ENCODE measurements at regions of chr7 and their contacts with region 1.

Region 1: DNA sequence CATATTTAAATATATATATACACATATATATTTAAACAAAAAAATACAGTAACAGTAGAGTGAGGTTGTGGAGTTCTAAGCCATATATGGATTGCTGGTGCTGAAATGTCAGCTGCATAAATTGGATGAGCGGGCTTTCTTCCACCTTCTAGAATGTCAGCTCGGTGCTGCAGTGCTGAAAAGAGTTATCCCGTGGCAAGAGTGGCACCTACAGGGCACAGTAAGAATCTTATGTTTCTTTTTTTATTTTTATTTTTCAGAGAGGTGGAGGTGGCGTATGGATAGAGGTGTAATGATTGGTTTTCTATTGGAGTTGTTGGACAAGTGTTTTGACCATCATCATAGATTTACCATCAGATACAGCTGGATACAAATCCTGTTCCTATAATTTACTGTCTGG is 86.2 kb upstream of the DYNC1I1 start:
- DNase-seq: no peak
- H3K4me3 ChIP-seq: no peak overlapping the region
- H3K27ac ChIP-seq: no peak overlapping the region
- H3K4me1 ChIP-seq: peaks cover 8 to 42% (median 16%) of the 10 kb centered on the region in 4 donors
- H3K27me3 ChIP-seq: no peaks in the 10 kb centered on the region
- CTCF ChIP-seq: peak; percentile 53 to 76 (median 62)
- EP300 ChIP-seq: no peak
- POLR2A ChIP-seq: no peak

Region 2: DNA sequence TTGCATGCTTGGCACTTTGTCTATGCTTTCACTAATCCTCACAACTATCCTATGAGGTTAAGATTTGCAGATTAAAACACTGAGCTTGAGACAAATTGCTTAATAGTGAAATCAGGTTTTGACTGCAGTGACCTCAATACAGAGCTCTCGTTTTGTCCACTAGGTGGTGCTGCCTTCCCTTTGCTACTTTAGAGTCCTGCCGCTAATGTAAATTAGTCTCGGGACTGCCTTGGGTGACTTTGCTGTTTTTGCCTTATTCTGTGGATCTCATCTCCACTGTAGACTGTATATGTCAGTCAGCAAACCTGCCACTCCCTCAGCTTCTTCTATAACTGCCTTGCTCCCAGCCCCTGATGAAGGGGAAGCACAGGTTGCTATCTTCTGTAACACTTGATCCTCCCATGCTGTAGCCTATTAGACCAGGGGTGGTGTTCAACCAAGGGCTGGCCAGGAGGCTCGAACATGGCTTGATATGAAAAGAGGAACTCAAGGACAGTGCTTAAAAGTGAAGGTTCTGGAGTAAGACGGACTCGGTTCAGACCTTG is 174.3 kb before region 1 on chr7:
- intact Hi-C with region 1: loop called (anchors 5 kb)
- DNase-seq: peak; percentile 94
- H3K4me3 ChIP-seq: no peak overlapping the region
- H3K27ac ChIP-seq: no peak overlapping the region
- H3K4me1 ChIP-seq: peaks cover 0 to 5% (median 4%) of the 10 kb centered on the region in 4 donors
- H3K27me3 ChIP-seq: peaks cover 0 to 13% (median 0%) of the 10 kb centered on the region in 4 donors
- CTCF ChIP-seq: peak; percentile 80 to 94 (median 87)
- EP300 ChIP-seq: no peak
- POLR2A ChIP-seq: no peak

Region 3: DNA sequence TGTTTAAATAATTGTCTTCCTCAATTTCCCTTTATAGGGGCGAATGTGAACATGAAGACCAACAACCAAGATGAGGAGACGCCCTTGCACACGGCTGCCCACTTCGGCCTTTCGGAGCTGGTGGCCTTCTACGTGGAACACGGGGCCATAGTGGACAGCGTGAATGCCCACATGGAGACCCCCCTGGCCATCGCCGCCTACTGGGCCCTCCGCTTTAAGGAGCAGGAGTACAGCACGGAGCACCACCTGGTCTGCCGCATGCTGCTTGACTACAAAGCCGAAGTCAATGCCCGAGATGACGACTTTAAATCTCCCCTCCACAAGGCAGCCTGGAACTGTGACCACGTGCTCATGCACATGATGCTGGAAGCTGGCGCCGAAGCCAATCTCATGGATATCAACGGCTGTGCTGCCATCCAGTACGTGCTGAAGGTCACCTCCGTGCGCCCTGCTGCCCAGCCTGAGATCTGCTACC is 158.3 kb before region 1 on chr7:
- intact Hi-C with region 1: loop called (anchors 1 kb)
- DNase-seq: no peak
- H3K4me3 ChIP-seq: no peak overlapping the region
- H3K27ac ChIP-seq: no peak overlapping the region
- H3K4me1 ChIP-seq: peaks cover 0 to 14% (median 5%) of the 10 kb centered on the region in 4 donors
- H3K27me3 ChIP-seq: no peaks in the 10 kb centered on the region
- CTCF ChIP-seq: no peak
- EP300 ChIP-seq: no peak
- POLR2A ChIP-seq: no peak

Region 4: DNA sequence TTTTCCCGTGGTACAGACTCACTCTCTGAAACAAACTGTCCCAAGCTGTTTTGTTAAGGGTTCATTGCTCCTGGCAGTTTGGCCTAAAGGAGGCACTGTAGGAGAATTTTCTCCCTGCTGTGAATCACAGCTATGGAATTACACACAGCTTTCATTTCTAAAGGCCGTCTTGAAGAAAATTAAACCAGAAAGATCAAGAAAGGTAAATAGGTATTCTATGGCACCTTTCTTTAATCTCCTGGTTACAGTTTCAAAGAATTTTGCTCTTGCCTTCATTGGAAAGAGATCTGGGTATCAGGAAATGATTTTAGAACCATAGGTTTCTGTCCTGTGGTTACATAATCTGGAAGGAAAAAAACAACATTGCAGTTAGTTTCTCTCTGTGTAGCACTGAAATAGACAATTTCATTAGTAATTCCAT is 141.0 kb before region 1 on chr7:
- intact Hi-C with region 1: loop called (anchors 2 kb)
- DNase-seq: no peak
- H3K4me3 ChIP-seq: peak overlapping the region; percentile 33 to 45 (median 44)
- H3K27ac ChIP-seq: peak overlapping the region; percentile 75 to 93 (median 90)
- H3K4me1 ChIP-seq: peaks cover 51 to 57% (median 57%) of the 10 kb centered on the region in 4 donors
- H3K27me3 ChIP-seq: no peaks in the 10 kb centered on the region
- CTCF ChIP-seq: peak; percentile 74 to 80 (median 74)
- EP300 ChIP-seq: no peak
- POLR2A ChIP-seq: no peak

Region 5: DNA sequence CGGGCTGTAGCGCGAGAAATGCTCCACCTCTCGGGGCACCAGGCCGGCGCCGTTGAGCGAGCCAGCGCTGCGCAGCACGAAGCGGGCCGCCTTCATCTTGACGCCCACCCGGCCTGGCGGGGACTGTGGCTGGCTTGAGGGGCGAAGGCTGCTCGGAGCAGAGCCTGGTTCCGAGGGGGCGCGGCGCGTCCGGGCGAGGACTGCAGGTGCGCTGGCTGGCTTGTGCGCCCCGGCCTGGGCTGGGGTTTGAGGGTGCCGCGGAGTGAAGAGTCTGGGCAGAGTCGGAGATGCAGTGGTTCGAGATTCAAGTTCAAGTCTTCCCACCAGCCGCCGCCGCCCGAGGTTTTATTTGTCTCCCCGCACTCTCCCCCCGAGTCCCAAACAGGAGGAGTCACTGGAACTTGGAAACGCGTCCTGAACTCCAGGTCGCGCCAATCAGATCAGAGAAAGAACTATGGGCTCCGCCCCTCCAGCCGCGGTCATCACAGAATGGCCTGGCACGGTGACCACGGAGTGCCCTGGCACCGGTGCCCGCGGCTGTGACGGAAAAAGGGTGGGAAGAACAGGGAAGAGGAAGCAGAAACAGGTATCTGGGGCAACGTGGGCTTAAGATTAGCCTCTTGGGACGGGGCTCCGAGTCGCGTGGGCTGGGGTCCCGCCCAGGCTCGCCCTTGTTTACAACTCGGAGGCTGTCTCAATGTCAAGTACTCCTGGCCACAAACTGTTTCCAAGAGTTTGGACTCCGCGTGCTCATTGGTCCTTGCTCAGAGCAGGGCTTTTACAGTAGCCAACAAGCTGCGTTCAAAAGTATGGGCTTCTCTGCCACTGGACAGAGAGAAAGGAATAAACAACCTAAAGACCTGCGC is 89.7 kb before region 1 on chr7 and contains the start of gene PDK4:
- intact Hi-C with region 1: loop called (anchors 5 kb)
- DNase-seq: peak; percentile 99
- H3K4me3 ChIP-seq: peak within 1 kb of the TSS; percentile 80 to 97 (median 88)
- H3K27ac ChIP-seq: peak within 1 kb of the TSS; percentile 93 to 99 (median 96)
- H3K4me1 ChIP-seq: peaks cover 22 to 46% (median 31%) of the 10 kb centered on the region in 4 donors
- H3K27me3 ChIP-seq: no peaks in the 10 kb centered on the region
- CTCF ChIP-seq: no peak
- EP300 ChIP-seq: peak; percentile 60
- POLR2A ChIP-seq: peak; percentile 83
- total RNA-seq, gene PDK4: 165 to 1,138 (median 371) TPM